MCF 10A (cell line): ENCODE measurements at regions of chr1 and their contacts with region 1.

Region 1: DNA sequence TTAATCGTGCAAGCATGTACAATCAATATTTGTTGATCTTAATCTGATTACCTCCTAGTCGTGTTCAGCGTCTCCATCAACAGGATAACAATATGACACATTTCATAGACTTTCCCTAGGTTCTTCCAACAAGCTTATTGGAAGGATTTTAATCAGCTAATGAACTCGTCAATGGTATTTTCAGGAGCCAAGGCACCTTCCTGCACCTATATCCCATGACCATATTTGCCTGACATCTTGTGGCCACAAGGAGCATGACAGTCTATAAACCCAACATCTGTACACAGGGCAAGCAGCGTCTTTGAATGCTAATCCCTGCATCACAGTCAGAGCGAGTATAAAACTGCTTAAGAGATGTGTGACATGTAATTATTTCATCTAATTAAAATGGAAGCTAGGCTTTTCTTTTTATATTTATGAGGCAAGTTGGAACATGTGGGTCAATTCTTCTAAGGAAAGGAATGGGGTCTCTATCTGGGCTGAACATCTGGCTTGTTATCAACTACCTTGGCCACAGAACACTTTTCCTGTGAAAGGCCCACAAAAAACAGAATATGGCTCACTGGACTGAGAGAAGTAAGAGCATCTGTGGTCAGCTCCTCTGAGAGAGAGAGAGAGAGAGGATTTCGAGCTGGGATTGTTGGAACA is 388.8 kb downstream of the NTNG1 start:
- DNase-seq: peak; percentile 75
- H3K4me3 Mint-ChIP-seq: no peak overlapping the region
- H3K27ac Mint-ChIP-seq: peak overlapping the region; percentile 46
- H3K4me1 Mint-ChIP-seq: peaks cover 39% of the 10 kb centered on the region
- H3K27me3 Mint-ChIP-seq: no peaks in the 10 kb centered on the region
- CTCF ChIP-seq: peak; percentile 79

Region 2: DNA sequence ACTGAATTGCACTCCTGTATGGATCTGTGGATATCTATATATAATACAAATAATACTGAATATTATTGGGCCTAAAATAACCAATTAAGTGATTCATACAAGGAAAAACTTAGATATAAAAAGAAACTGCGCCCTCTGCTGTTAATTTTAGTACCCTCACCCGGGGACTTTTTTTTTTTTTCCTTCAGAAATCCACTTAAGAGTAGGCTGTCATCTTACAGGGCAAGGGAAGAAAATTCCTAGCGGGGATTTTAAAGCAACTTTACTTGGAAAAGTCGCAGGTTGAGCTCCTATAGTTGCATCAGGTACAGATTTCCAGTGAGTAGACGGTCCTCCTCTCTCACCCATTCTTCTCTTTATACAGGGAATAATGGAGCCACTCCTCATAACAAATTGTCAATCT is 387.5 kb before region 1 on chr1:
- CTCF ChIA-PET with region 1: interaction called, 18 read pairs
- POLR2A ChIA-PET with region 1: no interaction called
- intact Hi-C with region 1: no loop called
- DNase-seq: peak; percentile 55
- H3K4me3 Mint-ChIP-seq: peak overlapping the region; percentile 76
- H3K27ac Mint-ChIP-seq: no peak overlapping the region
- H3K4me1 Mint-ChIP-seq: peaks cover 26% of the 10 kb centered on the region
- H3K27me3 Mint-ChIP-seq: no peaks in the 10 kb centered on the region
- CTCF ChIP-seq: peak; percentile 47

Region 3: DNA sequence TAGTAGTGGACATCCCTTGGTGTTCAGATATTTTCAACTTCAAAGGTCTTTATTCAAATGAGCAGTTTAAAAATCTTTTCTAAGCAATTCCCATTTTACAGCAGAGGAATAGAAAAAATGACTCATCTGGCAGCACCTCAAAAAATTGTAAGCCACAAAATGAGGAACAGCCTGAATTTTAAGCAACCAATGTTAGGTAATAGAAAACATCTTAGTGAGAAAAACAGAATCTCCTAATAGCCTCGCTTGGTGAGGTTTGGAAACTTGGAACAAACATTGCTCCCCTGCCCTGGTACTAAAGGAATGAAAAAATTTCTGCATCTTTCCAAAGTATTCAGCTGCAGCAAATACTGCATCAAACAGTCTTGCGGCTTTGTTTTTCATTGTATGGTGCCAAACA is 124.4 kb before region 1 on chr1:
- CTCF ChIA-PET with region 1: interaction called, 13 read pairs
- POLR2A ChIA-PET with region 1: no interaction called
- intact Hi-C with region 1: no loop called
- DNase-seq: peak; percentile 61
- H3K4me3 Mint-ChIP-seq: no peak overlapping the region
- H3K27ac Mint-ChIP-seq: no peak overlapping the region
- H3K4me1 Mint-ChIP-seq: peaks cover 19% of the 10 kb centered on the region
- H3K27me3 Mint-ChIP-seq: no peaks in the 10 kb centered on the region
- CTCF ChIP-seq: no peak

Region 4: DNA sequence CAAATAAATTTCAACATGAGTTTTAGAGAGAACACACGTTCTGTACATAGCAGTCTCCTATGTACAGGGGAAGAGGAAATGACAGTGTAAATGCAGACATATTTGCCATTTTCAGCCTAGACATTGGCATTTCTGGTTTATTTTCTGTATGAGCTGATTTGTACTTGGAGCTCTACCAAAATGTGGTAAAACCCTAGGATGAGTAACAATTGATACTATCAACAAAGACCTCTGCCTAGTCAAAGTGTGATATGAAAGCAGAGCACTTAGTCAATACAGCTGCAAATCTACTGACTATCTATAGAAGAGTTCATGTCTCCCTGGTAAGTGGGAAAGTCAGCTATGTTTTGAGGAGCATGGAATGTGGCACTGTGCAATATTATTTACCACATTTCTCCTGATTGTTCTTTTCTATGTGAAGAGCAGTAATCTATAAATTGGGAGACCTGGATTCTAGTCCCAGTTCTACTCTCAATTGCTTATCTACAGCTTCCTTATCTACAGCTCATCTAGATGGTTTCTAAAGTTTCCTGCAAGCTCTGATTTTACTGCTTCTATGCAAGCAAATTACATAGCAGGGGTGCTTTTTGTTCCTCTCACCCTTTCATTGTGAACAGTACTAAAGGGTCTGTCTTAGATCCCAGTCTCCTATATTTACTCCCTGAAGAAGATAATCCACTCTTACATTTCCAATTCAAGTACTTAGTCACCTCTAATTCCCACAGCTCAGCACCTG is 54.6 kb before region 1 on chr1:
- CTCF ChIA-PET with region 1: interaction called, 27 read pairs
- POLR2A ChIA-PET with region 1: interaction called, 4 read pairs
- intact Hi-C with region 1: no loop called
- DNase-seq: no peak
- H3K4me3 Mint-ChIP-seq: no peak overlapping the region
- H3K27ac Mint-ChIP-seq: peak overlapping the region; percentile 53
- H3K4me1 Mint-ChIP-seq: peaks cover 13% of the 10 kb centered on the region
- H3K27me3 Mint-ChIP-seq: no peaks in the 10 kb centered on the region
- CTCF ChIP-seq: no peak

Region 5: DNA sequence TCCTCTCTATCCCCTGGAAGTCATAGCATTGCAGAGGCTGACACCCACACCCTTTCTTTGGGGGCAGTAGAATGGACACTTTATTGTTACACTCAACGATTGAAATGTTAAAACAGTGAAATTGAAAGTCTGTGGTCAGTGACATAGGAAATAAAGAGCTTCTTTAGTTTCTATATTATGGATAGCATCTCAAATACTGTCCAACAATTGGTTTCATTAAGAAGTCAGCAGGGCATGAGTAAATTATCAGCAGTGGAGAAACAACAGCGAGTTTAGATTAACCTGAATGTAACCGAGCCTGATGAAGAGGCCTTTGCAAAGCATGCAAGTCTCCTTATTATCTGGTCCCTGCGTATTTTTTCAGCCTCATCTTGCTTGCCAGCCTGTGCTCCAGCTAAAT is 38.0 kb before region 1 on chr1:
- CTCF ChIA-PET with region 1: interaction called, 27 read pairs
- POLR2A ChIA-PET with region 1: interaction called, 36 read pairs
- intact Hi-C with region 1: no loop called
- DNase-seq: no peak
- H3K4me3 Mint-ChIP-seq: no peak overlapping the region
- H3K27ac Mint-ChIP-seq: no peak overlapping the region
- H3K4me1 Mint-ChIP-seq: peaks cover 5% of the 10 kb centered on the region
- H3K27me3 Mint-ChIP-seq: no peaks in the 10 kb centered on the region
- CTCF ChIP-seq: no peak

Region 6: DNA sequence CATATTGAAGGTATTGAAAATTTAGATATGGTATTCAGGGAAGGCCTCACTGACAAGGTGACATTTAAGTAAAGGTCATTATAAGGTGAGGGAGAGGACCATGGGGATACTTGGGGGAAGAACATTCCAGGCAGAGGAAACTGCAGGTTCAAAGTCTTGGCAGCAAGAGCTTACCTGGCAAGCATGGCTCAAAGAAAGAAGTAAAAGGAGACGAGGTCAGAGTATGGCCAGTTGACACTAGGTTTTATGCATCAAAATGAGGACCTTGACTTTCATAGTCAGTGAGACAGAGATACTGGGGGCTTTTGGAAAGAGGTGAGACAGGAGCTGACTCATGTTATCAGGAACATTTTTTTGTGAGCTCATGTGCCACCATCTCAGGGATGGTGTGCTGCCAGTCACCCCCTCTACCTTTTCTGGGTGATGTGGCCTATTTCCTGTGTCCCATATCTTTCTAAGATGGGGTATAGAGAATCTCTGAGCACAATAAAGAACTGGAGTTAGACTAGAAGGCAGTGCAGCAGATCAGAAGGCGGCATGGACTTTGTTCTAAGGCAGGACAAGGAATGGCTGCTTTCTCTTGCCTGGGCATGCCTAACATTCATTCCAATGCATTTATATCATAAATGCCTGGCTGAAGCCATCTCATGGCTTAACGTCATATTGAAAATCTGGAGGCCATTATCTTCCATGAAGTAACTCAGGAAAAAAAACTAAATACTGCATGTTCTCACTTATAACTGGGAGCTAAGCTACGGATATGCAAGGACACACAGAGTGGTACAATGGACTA is 17.9 kb after region 1 on chr1:
- CTCF ChIA-PET with region 1: interaction called, 16 read pairs
- POLR2A ChIA-PET with region 1: interaction called, 9 read pairs
- intact Hi-C with region 1: no loop called
- DNase-seq: peak; percentile 55
- H3K4me3 Mint-ChIP-seq: no peak overlapping the region
- H3K27ac Mint-ChIP-seq: no peak overlapping the region
- H3K4me1 Mint-ChIP-seq: peaks cover 6% of the 10 kb centered on the region
- H3K27me3 Mint-ChIP-seq: no peaks in the 10 kb centered on the region
- CTCF ChIP-seq: no peak

Region 7: DNA sequence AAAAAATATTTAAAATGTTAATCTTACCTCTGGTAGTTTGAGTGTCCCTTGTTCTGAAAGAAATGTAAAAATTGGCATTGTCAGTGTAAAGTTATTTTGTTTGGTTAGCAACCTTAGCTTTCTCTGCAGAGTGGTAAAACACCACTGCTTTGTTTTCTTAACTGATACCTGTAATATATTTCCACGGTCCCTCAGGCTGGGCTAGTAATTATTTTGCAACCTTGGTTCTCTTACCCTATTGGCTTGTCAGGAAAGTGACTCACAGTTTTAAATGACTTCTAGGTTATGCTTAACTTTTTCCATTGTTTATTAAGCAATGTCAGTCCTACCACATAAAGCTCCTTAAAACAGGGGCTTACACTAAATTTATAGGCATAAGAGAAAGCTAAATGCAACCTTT is 158.7 kb after region 1 on chr1:
- CTCF ChIA-PET with region 1: interaction called, 8 read pairs
- POLR2A ChIA-PET with region 1: interaction called, 26 read pairs
- intact Hi-C with region 1: no loop called
- DNase-seq: peak; percentile 94
- H3K4me3 Mint-ChIP-seq: peak overlapping the region; percentile 79
- H3K27ac Mint-ChIP-seq: peak overlapping the region; percentile 90
- H3K4me1 Mint-ChIP-seq: peaks cover 42% of the 10 kb centered on the region
- H3K27me3 Mint-ChIP-seq: no peaks in the 10 kb centered on the region
- CTCF ChIP-seq: no peak